Activated naive CD4-positive, alpha-beta T cell treated with anti-CD3 and anti-CD28 coated beads for 36 hours (primary cell): ENCODE measurements at regions of chr7 and their contacts with region 1.

Region 1: GRCh38 chr7:112550468-112551060 is 69.8 kb downstream of the LSMEM1 start:
- DNase-seq: peak; percentile 39
- H3K4me3 Mint-ChIP-seq: no peak overlapping the region
- H3K27ac Mint-ChIP-seq: no peak overlapping the region
- H3K4me1 Mint-ChIP-seq: no peaks in the 10 kb centered on the region
- H3K27me3 Mint-ChIP-seq: peaks cover 11% of the 10 kb centered on the region

Region 2: GRCh38 chr7:112869111-112869757 is 318.7 kb after region 1 on chr7:
- CTCF ChIA-PET with region 1: interaction called, 4 read pairs
- intact Hi-C with region 1: loop called (anchors 1 kb)
- DNase-seq: peak; percentile 70
- H3K4me3 Mint-ChIP-seq: no peak overlapping the region
- H3K27ac Mint-ChIP-seq: no peak overlapping the region
- H3K4me1 Mint-ChIP-seq: peaks cover 14% of the 10 kb centered on the region
- H3K27me3 Mint-ChIP-seq: no peaks in the 10 kb centered on the region

Region 3: GRCh38 chr7:113015032-113015645 is 464.6 kb after region 1 on chr7:
- CTCF ChIA-PET with region 1: no interaction called
- intact Hi-C with region 1: loop called (anchors 1 kb)
- DNase-seq: no peak
- H3K4me3 Mint-ChIP-seq: no peak overlapping the region
- H3K27ac Mint-ChIP-seq: no peak overlapping the region
- H3K4me1 Mint-ChIP-seq: no peaks in the 10 kb centered on the region
- H3K27me3 Mint-ChIP-seq: no peaks in the 10 kb centered on the region

Region 4: GRCh38 chr7:113421696-113422330 is 871.2 kb after region 1 on chr7:
- CTCF ChIA-PET with region 1: interaction called, 27 read pairs
- intact Hi-C with region 1: loop called (anchors 1 kb)
- DNase-seq: peak; percentile 91
- H3K4me3 Mint-ChIP-seq: no peak overlapping the region
- H3K27ac Mint-ChIP-seq: no peak overlapping the region
- H3K4me1 Mint-ChIP-seq: peaks cover 3% of the 10 kb centered on the region
- H3K27me3 Mint-ChIP-seq: peaks cover 2% of the 10 kb centered on the region

Region 5: DNA sequence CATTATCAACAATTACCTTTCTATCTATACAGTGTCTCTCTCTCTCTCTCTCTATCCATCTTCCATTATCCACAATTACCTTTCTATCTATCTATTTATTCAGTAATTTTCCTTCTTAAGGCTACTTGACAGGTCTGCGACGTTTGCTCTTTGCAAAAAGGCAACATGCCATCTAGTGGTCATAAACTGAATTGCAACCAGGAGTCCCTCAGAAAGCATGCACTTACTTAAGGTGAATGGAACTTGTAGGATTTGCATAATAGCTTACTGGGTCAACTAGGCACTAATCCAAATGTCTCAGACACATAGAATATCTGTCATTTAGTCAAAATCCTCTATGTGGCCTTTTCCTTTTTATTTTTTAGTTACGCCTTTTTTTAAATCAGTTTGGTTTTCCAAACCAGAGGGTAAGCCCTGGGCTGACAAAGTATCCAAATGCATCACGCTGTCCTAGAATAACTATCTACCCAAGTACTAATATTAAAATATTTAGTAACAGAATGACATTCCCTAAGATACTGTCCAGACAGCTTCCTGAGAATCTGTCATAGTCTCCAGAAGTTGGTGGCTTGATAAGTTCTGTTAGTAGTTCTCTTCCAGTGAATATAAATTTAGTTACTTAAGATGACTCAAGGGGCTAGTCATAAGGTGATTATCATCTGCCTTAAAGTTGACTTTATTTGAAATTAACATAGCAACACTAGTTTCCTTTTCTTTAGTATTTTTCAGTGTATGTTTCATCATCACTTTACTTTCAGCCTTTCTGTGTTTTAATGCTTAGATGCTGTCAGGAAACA is 1159.9 kb after region 1 on chr7:
- CTCF ChIA-PET with region 1: no interaction called
- intact Hi-C with region 1: loop called (anchors 1 kb)
- DNase-seq: peak; percentile 56
- H3K4me3 Mint-ChIP-seq: no peak overlapping the region
- H3K27ac Mint-ChIP-seq: no peak overlapping the region
- H3K4me1 Mint-ChIP-seq: no peaks in the 10 kb centered on the region
- H3K27me3 Mint-ChIP-seq: peaks cover 10% of the 10 kb centered on the region